IMR-90 (cell line): ENCODE measurements at regions of chr9 and their contacts with region 1.

Region 1: GRCh38 chr9:2087500-2088313 is 72.6 kb downstream of the SMARCA2 start:
- DNase-seq: peak; percentile 52
- ATAC-seq: peak; percentile 80
- H3K4me3 ChIP-seq: no peak overlapping the region
- H3K27ac ChIP-seq: no peak overlapping the region
- H3K4me1 ChIP-seq: no peaks in the 10 kb centered on the region
- H3K27me3 ChIP-seq: no peaks in the 10 kb centered on the region
- CTCF ChIP-seq: peak; percentile 63
- POLR2A ChIP-seq: no peak
- RAD21 ChIP-seq: peak; percentile 63

Region 2: GRCh38 chr9:1939926-1940368 is 147.8 kb before region 1 on chr9:
- CTCF ChIA-PET with region 1: no interaction called
- POLR2A ChIA-PET with region 1: interaction called, 3 read pairs
- dilution Hi-C with region 1: no loop called
- in situ Hi-C with region 1: no loop called
- intact Hi-C with region 1: loop called (anchors 5 kb)
- DNase-seq: peak; percentile 1
- ATAC-seq: no peak; the same call in 1 of the 2 replicates
- H3K4me3 ChIP-seq: no peak overlapping the region
- H3K27ac ChIP-seq: no peak overlapping the region
- H3K4me1 ChIP-seq: no peaks in the 10 kb centered on the region
- H3K27me3 ChIP-seq: no peaks in the 10 kb centered on the region
- CTCF ChIP-seq: peak; percentile 33; the same call in 1 of the 2 replicates
- POLR2A ChIP-seq: no peak
- RAD21 ChIP-seq: peak; percentile 11; the same call in 1 of the 2 replicates